SK-N-SH (cell line): ENCODE measurements at regions of chr17 and their contacts with region 1.

Region 1: GRCh38 chr17:52106638-52107261 is 51.8 kb downstream of the CA10 start:
- DNase-seq: peak; percentile 69
- H3K4me3 ChIP-seq: no peak overlapping the region
- H3K27ac ChIP-seq: no peak overlapping the region
- H3K4me1 ChIP-seq: no peaks in the 10 kb centered on the region
- H3K27me3 ChIP-seq: no peaks in the 10 kb centered on the region
- CTCF ChIP-seq: peak; percentile 100
- EP300 ChIP-seq: no peak
- RAD21 ChIP-seq: peak; percentile 93

Region 2: GRCh38 chr17:51298508-51299371 is 808.0 kb before region 1 on chr17:
- CTCF ChIA-PET with region 1: interaction called, 15 read pairs
- POLR2A ChIA-PET with region 1: no interaction called
- DNase-seq: peak; percentile 65
- H3K4me3 ChIP-seq: no peak overlapping the region; a peak in 1 of 4 replicates
- H3K27ac ChIP-seq: no peak overlapping the region; a peak in 1 of 4 replicates
- H3K4me1 ChIP-seq: no peaks in the 10 kb centered on the region
- H3K27me3 ChIP-seq: no peaks in the 10 kb centered on the region
- CTCF ChIP-seq: peak; percentile 91
- EP300 ChIP-seq: no peak
- RAD21 ChIP-seq: peak; percentile 98

Region 3: DNA sequence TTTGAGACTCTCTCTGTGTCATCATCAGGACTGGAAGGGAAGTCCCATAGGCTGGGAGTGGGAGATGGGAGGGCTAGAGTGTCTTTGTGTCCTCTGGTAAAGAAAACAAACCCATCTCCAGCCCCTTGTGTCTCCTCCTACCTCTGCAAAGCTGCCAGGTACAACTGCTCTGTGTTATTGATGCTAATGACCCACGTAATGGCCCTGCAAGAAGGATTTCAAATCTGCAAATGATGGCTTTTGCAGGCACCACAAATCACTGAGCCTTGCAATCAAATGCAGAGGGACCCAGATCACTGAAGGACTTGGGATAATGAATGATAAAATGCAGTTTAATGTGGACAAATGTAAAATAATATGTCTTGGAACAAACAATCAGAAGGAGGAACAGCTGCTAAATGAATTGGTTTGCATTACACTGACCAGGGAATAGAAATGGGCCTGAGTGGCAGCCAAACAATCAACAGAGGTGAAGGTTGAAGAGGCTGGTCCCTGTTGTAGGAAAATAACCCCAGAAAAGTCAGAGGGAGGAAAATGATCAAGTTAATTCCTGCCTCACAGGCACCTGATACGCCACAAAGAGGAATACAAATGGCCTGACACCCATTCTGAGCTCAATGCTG is 421.4 kb before region 1 on chr17:
- CTCF ChIA-PET with region 1: no interaction called
- POLR2A ChIA-PET with region 1: no interaction called
- DNase-seq: no peak
- H3K4me3 ChIP-seq: no peak overlapping the region
- H3K27ac ChIP-seq: no peak overlapping the region
- H3K4me1 ChIP-seq: no peaks in the 10 kb centered on the region
- H3K27me3 ChIP-seq: no peaks in the 10 kb centered on the region
- CTCF ChIP-seq: no peak
- EP300 ChIP-seq: no peak
- RAD21 ChIP-seq: no peak

Region 4: GRCh38 chr17:51764387-51764972 is 342.3 kb before region 1 on chr17:
- CTCF ChIA-PET with region 1: interaction called, 198 read pairs
- POLR2A ChIA-PET with region 1: no interaction called
- DNase-seq: peak; percentile 76
- H3K4me3 ChIP-seq: no peak overlapping the region
- H3K27ac ChIP-seq: no peak overlapping the region
- H3K4me1 ChIP-seq: peaks cover 0 to 3% of the 10 kb centered on the region in 2 experiments; a peak in 1 of 4 replicates
- H3K27me3 ChIP-seq: no peaks in the 10 kb centered on the region
- CTCF ChIP-seq: peak; percentile 96
- EP300 ChIP-seq: no peak
- RAD21 ChIP-seq: peak; percentile 97

Region 5: DNA sequence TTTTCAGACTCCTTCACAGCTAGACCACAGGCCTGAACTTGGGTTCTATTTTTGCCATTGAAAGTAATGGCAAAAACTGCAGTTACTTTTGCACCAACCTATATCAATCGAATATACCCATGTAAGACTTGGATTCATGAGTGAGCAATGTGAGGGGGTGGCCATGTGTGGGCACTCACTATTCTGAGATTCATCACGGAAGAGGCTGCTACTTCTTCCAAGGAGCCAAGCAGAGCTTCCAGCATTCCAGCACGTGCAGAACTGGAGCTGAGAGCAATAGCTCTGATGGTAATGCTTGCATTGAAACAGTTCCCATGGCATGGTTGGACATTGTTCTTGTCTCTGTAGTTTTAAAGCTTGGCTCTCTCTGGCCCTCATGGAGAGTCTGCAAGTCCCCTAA is 275.9 kb before region 1 on chr17:
- CTCF ChIA-PET with region 1: interaction called, 22 read pairs
- POLR2A ChIA-PET with region 1: no interaction called
- DNase-seq: no peak
- H3K4me3 ChIP-seq: no peak overlapping the region
- H3K27ac ChIP-seq: no peak overlapping the region
- H3K4me1 ChIP-seq: no peaks in the 10 kb centered on the region
- H3K27me3 ChIP-seq: no peaks in the 10 kb centered on the region
- CTCF ChIP-seq: no peak
- EP300 ChIP-seq: no peak
- RAD21 ChIP-seq: no peak

Region 6: GRCh38 chr17:51908840-51909537 is 197.8 kb before region 1 on chr17:
- CTCF ChIA-PET with region 1: interaction called, 17 read pairs
- POLR2A ChIA-PET with region 1: no interaction called
- DNase-seq: peak; percentile 12
- H3K4me3 ChIP-seq: no peak overlapping the region
- H3K27ac ChIP-seq: no peak overlapping the region; a peak in 1 of 4 replicates
- H3K4me1 ChIP-seq: peaks cover 0 to 5% of the 10 kb centered on the region in 2 experiments; a peak in 2 of 4 replicates
- H3K27me3 ChIP-seq: no peaks in the 10 kb centered on the region
- CTCF ChIP-seq: no peak
- EP300 ChIP-seq: no peak
- RAD21 ChIP-seq: peak; percentile 6; the same call in 1 of the 2 replicates

Region 7: DNA sequence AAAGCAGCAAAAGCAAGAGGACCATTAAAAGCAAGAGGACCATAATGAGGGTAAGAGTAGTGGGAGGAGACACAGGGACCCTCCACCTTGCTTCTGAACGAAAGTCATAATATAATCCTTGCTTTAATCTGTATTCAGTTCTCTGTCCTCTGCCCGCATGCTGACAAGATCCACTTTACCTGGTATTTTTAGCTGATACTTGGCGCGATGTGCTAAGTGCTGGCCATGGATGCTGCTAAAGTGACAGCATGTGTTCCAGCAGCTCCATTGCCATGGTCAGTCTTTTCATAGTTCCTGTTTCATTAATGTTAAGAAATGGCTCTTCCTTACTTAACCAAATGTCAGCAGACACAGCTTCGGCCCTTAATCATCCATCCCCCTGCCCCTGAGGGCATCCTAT is 35.0 kb before region 1 on chr17:
- CTCF ChIA-PET with region 1: interaction called, 12 read pairs
- POLR2A ChIA-PET with region 1: no interaction called
- DNase-seq: no peak
- H3K4me3 ChIP-seq: no peak overlapping the region
- H3K27ac ChIP-seq: no peak overlapping the region
- H3K4me1 ChIP-seq: peaks cover 0 to 4% of the 10 kb centered on the region in 2 experiments; a peak in 1 of 4 replicates
- H3K27me3 ChIP-seq: no peaks in the 10 kb centered on the region
- CTCF ChIP-seq: no peak
- EP300 ChIP-seq: no peak
- RAD21 ChIP-seq: no peak

Region 8: DNA sequence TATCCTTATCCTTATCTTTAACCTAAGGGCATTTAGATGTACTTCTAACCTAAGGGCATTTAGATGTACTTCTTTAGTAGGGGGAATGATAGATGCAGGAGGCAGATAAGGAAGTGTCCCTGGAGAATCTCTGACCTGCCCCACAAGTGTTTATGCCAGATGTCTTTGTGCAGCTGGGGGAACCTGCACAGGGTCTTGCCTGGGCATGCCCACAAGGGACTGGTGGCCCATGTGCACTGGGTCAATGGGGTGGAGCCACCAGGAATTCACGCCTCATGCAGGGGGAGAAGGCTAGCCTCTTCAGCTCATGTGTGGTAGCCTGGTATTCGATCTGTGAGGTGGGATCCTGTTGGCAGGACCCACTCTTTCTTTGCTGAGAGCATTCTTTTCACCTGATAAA is 13.7 kb after region 1 on chr17:
- CTCF ChIA-PET with region 1: interaction called, 39 read pairs
- POLR2A ChIA-PET with region 1: no interaction called
- DNase-seq: no peak
- H3K4me3 ChIP-seq: no peak overlapping the region; a peak in 1 of 4 replicates
- H3K27ac ChIP-seq: no peak overlapping the region
- H3K4me1 ChIP-seq: no peaks in the 10 kb centered on the region; a peak in 1 of 4 replicates
- H3K27me3 ChIP-seq: no peaks in the 10 kb centered on the region
- CTCF ChIP-seq: no peak
- EP300 ChIP-seq: no peak
- RAD21 ChIP-seq: no peak